Activated CD4-positive, alpha-beta T cell treated with anti-CD3 and anti-CD28 coated beads for 36 hours (primary cell): ENCODE measurements at regions of chr13 and their contacts with region 1.

Region 1: GRCh38 chr13:97109841-97110492 is 112.2 kb upstream of the MBNL2 start:
- DNase-seq: peak; percentile 88
- ATAC-seq: peak; percentile 93
- H3K4me3 Mint-ChIP-seq: no peak overlapping the region
- H3K27ac Mint-ChIP-seq: no peak overlapping the region
- H3K4me1 Mint-ChIP-seq: peaks cover 14% of the 10 kb centered on the region
- H3K27me3 Mint-ChIP-seq: peaks cover 12% of the 10 kb centered on the region

Region 2: DNA sequence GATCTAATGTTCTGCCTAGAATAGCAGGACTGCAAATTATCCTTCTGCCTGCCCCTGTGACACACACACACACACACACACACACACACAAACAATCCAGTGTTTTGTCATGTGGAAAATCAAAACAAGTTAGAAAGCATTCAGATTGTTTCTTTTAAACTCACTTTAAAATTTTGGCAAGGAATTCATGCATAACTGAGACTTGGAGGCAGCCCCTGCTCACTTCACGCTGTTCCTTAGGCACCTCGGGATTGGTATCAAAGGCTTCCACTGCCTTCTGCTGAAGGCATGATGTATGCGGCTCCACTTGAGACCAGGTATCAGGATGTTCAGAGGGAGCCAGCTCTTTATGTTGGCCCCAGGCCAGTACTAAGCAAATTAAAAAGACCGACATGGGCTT is 274.4 kb before region 1 on chr13:
- CTCF ChIA-PET with region 1: no interaction called
- POLR2A ChIA-PET with region 1: no interaction called
- intact Hi-C with region 1: no loop called
- DNase-seq: no peak
- ATAC-seq: no peak
- H3K4me3 Mint-ChIP-seq: no peak overlapping the region
- H3K27ac Mint-ChIP-seq: no peak overlapping the region
- H3K4me1 Mint-ChIP-seq: no peaks in the 10 kb centered on the region
- H3K27me3 Mint-ChIP-seq: no peaks in the 10 kb centered on the region

Region 3: DNA sequence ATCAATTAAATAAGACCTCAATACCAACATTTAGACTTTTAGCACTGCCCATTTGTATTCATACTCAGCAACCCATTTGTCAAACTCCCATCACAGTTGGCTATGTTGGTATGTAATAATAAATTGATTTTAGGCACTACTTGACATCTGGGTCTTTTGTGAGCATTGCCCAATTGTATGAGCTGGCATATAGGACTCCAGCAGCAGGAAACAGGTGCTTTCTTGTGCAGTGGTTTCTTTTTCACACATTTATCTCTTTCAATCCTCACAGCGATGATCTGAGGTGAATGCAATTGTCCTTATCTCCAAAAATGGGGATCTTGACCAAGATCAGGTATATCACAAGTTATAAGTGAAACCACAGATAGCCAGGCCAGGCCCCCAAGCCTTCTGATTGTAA is 18.8 kb before region 1 on chr13:
- CTCF ChIA-PET with region 1: interaction called, 10 read pairs
- POLR2A ChIA-PET with region 1: no interaction called
- intact Hi-C with region 1: no loop called
- DNase-seq: no peak
- ATAC-seq: no peak
- H3K4me3 Mint-ChIP-seq: no peak overlapping the region
- H3K27ac Mint-ChIP-seq: no peak overlapping the region
- H3K4me1 Mint-ChIP-seq: no peaks in the 10 kb centered on the region
- H3K27me3 Mint-ChIP-seq: peaks cover 4% of the 10 kb centered on the region

Region 4: DNA sequence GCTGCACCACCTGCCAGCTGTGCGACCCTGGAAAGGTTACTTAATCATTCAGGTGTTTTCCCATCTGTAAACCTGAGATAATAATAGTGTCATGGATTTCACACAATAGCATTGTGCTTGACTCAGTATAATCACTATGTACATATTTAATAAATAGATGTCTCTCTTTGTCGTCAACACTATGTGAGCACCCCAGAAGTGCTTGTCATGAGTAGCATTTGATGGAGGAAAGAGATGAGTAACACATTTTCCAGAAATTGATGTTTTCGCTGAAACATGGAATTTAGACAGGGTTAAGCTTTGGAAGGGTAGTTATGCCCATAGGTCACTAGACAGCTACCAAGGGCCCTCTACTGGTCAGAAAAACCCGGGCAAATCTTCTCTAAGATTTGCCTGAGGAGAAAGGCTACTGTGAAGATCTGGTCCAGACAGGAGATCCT is 102.7 kb after region 1 on chr13:
- CTCF ChIA-PET with region 1: interaction called, 7 read pairs
- POLR2A ChIA-PET with region 1: no interaction called
- intact Hi-C with region 1: loop called (anchors 1 to 5 kb)
- DNase-seq: no peak
- ATAC-seq: peak; percentile 30
- H3K4me3 Mint-ChIP-seq: no peak overlapping the region
- H3K27ac Mint-ChIP-seq: no peak overlapping the region
- H3K4me1 Mint-ChIP-seq: peaks cover 48% of the 10 kb centered on the region
- H3K27me3 Mint-ChIP-seq: no peaks in the 10 kb centered on the region

Region 5: DNA sequence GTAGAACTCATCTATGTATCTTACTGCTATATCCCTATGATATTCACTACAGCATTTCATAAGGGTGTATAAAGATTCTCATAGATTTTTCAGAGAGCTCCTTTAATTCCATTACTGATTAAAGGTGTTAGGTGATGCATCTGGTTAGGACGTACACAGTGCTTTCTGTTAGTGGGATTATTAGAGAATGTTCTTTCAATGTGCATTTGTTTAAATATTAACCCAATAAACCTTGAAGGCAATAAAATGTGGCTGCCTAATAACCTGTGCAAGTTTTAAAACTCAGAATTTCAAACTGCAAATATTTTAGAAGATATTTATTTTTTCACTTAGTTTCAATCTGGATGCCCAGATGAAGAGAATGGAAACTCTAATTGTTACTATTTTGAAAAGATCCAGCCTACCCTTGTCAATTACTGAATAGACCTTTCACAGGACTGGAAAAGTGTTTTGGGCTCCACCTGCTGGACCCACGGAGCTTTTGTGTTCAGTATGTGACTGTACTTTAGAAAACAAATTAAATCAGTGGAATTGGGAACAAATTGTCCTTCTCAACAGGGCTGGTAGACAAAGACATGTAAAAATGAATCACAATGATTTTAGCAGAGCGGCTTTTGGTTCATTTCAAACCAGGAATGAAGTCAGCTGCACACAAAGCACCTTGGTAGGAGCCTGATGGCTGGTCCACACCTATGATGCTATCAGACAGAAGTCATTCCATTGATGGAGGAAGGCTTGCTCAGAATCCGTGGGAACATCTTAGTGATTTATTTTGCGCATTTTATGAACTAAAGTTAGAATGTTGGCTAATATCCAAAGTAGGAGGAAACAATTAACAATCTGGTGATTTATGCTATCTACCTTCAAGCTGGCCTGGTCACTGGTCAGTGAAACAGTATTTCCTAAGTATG is 234.6 kb after region 1 on chr13:
- CTCF ChIA-PET with region 1: interaction called, 77 read pairs
- POLR2A ChIA-PET with region 1: no interaction called
- intact Hi-C with region 1: loop called (anchors 1 kb)
- DNase-seq: peak; percentile 73
- ATAC-seq: peak; percentile 80
- H3K4me3 Mint-ChIP-seq: no peak overlapping the region
- H3K27ac Mint-ChIP-seq: no peak overlapping the region
- H3K4me1 Mint-ChIP-seq: peaks cover 8% of the 10 kb centered on the region
- H3K27me3 Mint-ChIP-seq: no peaks in the 10 kb centered on the region

Region 6: DNA sequence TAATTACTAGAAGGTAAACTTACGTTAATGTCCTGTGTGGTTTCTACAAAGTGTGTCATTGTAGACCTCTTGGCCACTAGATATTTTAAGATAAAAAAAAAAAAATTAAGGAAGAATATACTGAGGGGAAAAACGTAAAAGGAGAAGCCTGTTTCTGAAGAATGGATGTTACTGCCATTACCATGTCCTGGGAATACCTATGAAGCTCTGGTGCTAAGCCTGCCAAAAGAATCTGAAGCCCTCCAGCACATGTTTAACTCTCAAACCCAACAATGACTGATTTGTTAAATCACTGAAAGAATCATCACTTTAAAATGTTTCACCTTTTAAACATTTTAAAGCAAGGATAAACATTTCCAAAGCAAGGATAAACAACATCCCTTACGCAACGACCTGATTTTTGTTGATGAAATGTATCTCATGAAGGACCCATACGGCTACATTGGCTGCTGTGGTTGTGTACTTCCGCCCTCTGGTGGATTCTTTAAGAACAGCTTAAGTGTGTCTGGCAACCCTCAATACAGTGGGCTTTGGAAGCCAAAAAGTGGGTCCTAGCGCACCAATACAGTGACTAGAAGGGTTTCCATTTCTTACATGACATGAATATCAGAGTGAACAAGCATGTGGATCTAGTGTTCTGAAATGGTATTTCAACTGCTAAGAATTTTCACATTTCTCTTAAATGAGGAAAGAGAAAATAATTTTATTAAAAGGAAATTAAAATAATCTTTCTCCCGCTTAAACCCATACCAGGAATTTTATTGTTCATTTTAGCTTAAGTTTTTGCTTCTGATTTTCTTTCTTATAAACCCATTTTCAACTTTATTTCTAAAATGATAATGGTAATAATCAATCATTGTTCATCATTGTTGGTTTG is 249.5 kb after region 1 on chr13:
- CTCF ChIA-PET with region 1: interaction called, 152 read pairs
- POLR2A ChIA-PET with region 1: no interaction called
- intact Hi-C with region 1: loop called (anchors 1 kb)
- DNase-seq: peak; percentile 58
- ATAC-seq: peak; percentile 90
- H3K4me3 Mint-ChIP-seq: no peak overlapping the region
- H3K27ac Mint-ChIP-seq: no peak overlapping the region
- H3K4me1 Mint-ChIP-seq: no peaks in the 10 kb centered on the region
- H3K27me3 Mint-ChIP-seq: no peaks in the 10 kb centered on the region

Region 7: GRCh38 chr13:97367016-97367822 is 257.3 kb after region 1 on chr13:
- CTCF ChIA-PET with region 1: interaction called, 152 read pairs
- POLR2A ChIA-PET with region 1: no interaction called
- intact Hi-C with region 1: no loop called
- DNase-seq: no peak
- ATAC-seq: no peak
- H3K4me3 Mint-ChIP-seq: no peak overlapping the region
- H3K27ac Mint-ChIP-seq: no peak overlapping the region
- H3K4me1 Mint-ChIP-seq: peaks cover 21% of the 10 kb centered on the region
- H3K27me3 Mint-ChIP-seq: no peaks in the 10 kb centered on the region

Region 8: DNA sequence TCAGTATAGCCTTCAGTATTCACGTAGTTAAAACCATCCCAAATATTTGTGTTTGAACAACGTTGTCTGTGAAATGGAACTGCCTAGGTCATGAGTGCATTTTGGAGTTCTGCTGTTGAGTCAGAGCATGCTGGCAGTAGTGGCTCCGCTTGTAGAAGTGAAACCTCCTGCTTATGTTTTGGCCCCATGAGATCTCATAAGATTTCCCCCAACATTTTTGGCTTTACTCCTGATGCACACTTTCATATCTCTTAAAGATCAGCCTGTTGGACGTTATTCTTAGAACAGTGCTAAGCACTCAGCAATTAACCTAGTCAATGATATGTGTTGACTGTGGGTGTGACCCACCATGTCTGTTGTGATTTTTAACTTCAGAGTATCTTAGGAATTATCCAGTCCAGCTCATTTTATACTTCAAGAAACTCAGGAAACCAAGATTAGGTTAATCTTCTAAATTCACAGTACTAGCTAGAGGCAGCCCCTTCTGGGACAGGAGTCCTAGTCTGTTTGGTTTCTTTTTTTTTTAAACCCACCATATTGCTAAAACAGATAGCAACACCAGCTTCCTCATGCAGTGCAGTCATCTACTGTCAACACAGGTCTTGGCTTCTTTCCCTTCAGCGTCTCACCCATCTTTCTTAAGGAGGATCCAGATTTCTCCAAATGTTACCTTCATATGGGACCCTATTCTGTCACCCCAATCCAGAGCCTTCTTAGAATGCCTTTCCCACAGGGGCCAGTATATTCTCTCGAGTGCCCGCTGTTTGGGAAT is 350.2 kb after region 1 on chr13:
- CTCF ChIA-PET with region 1: no interaction called
- POLR2A ChIA-PET with region 1: no interaction called
- intact Hi-C with region 1: no loop called
- DNase-seq: peak; percentile 15
- ATAC-seq: peak; percentile 74
- H3K4me3 Mint-ChIP-seq: no peak overlapping the region
- H3K27ac Mint-ChIP-seq: peak overlapping the region; percentile 42
- H3K4me1 Mint-ChIP-seq: peaks cover 33% of the 10 kb centered on the region
- H3K27me3 Mint-ChIP-seq: no peaks in the 10 kb centered on the region

Region 9: GRCh38 chr13:97574926-97575325 is 465.0 kb after region 1 on chr13:
- CTCF ChIA-PET with region 1: no interaction called
- POLR2A ChIA-PET with region 1: no interaction called
- intact Hi-C with region 1: loop called in 1 of 2 experiments (anchors 10 kb)
- DNase-seq: peak; percentile 50
- ATAC-seq: no peak
- H3K4me3 Mint-ChIP-seq: no peak overlapping the region
- H3K27ac Mint-ChIP-seq: no peak overlapping the region
- H3K4me1 Mint-ChIP-seq: no peaks in the 10 kb centered on the region
- H3K27me3 Mint-ChIP-seq: peaks cover 14% of the 10 kb centered on the region